ENCODE measurements at regions of chr7 and their contacts with region 1.

Region 1: DNA sequence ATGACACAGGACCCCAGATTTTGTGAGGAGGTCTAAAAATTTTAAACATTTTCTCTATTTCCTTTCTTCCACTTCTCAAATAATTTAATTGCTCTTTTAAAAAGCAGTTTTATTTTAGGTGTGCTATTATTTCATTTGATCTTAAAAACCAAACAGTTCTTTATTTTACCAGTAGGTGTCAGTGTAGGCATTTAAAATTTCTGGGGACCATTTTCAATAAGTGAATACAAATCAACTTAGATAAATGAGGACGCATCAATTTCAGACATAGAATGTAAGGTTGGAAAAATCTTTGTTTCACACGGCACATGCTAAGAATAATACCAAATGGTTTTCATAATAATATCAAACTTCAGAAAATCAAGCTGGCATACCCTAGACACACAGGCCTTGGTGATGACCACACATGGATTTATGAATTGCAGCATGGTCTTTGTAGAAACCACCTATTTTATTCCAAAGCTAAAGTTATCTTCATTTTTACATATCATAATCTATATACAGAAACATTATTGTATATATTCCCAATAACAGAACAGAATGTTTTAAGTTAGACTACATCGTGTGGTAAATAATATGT is 127.6 kb upstream of the SLC26A5 start:
- DNase-seq: no peak
- ATAC-seq: no peak
- H3K4me3 ChIP-seq: no peak overlapping the region
- H3K27ac ChIP-seq: no peak overlapping the region
- H3K4me1 ChIP-seq: no peaks in the 10 kb centered on the region
- H3K27me3 ChIP-seq: no peaks in the 10 kb centered on the region; a peak in 1 of 4 replicates
- CTCF ChIP-seq: peak; percentile 14 to 55 (median 38); a peak in 2 of 6 replicates
- EP300 ChIP-seq: no peak
- POLR2A ChIP-seq: no peak
- RAD21 ChIP-seq: peak; percentile 60

Region 2: DNA sequence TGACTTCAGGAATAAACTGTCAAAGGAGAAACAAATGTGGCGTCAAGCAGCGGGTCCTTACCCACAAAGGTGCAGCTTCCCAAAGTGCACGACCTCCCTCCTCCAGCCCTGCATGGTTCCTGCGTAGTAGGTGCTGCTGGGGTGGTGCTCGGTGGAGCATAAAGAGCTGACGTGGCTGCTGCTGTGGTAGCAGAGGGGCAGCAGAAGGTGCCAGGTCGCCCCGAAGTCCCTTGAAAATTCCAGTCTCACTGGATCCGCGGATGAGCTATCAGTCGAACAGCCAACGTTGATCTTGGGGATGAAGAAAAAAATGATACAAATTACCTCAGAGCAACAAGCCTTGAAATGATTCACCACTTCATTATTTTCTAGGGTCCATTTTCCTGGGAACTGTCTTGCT is 22.6 kb before region 1 on chr7:
- CTCF ChIA-PET with region 1: interaction called, 13 read pairs
- POLR2A ChIA-PET with region 1: no interaction called
- RAD21 ChIA-PET with region 1: no interaction called
- SMC1A ChIA-PET with region 1: no interaction called
- in situ Hi-C with region 1: no loop called
- intact Hi-C with region 1: no loop called
- DNase-seq: no peak
- ATAC-seq: no peak
- H3K4me3 ChIP-seq: no peak overlapping the region
- H3K27ac ChIP-seq: no peak overlapping the region
- H3K4me1 ChIP-seq: no peaks in the 10 kb centered on the region
- H3K27me3 ChIP-seq: no peaks in the 10 kb centered on the region
- CTCF ChIP-seq: no peak
- EP300 ChIP-seq: no peak
- POLR2A ChIP-seq: no peak
- RAD21 ChIP-seq: no peak

Region 3: GRCh38 chr7:103592187-103592586 is 18.6 kb after region 1 on chr7:
- CTCF ChIA-PET with region 1: interaction called, 11 read pairs
- POLR2A ChIA-PET with region 1: no interaction called
- RAD21 ChIA-PET with region 1: no interaction called
- SMC1A ChIA-PET with region 1: no interaction called
- in situ Hi-C with region 1: no loop called
- intact Hi-C with region 1: no loop called
- DNase-seq: no peak
- ATAC-seq: no peak
- H3K4me3 ChIP-seq: no peak overlapping the region
- H3K27ac ChIP-seq: no peak overlapping the region
- H3K4me1 ChIP-seq: no peaks in the 10 kb centered on the region
- H3K27me3 ChIP-seq: no peaks in the 10 kb centered on the region
- CTCF ChIP-seq: no peak
- EP300 ChIP-seq: no peak
- POLR2A ChIP-seq: no peak
- RAD21 ChIP-seq: no peak

Region 4: GRCh38 chr7:104156842-104157277 is 583.3 kb after region 1 on chr7:
- CTCF ChIA-PET with region 1: interaction called, 10 read pairs
- POLR2A ChIA-PET with region 1: no interaction called
- RAD21 ChIA-PET with region 1: no interaction called
- SMC1A ChIA-PET with region 1: interaction called, 6 read pairs
- in situ Hi-C with region 1: loop called (anchors 10 kb)
- intact Hi-C with region 1: loop called (anchors 1 kb)
- DNase-seq: no peak
- ATAC-seq: peak; percentile 42; the same call in 1 of the 3 replicates
- H3K4me3 ChIP-seq: no peak overlapping the region
- H3K27ac ChIP-seq: no peak overlapping the region
- H3K4me1 ChIP-seq: no peaks in the 10 kb centered on the region
- H3K27me3 ChIP-seq: no peaks in the 10 kb centered on the region
- CTCF ChIP-seq: peak; percentile 50 to 59 (median 56); a peak in 5 of 6 replicates
- EP300 ChIP-seq: no peak
- POLR2A ChIP-seq: no peak
- RAD21 ChIP-seq: peak; percentile 55

Region 5: DNA sequence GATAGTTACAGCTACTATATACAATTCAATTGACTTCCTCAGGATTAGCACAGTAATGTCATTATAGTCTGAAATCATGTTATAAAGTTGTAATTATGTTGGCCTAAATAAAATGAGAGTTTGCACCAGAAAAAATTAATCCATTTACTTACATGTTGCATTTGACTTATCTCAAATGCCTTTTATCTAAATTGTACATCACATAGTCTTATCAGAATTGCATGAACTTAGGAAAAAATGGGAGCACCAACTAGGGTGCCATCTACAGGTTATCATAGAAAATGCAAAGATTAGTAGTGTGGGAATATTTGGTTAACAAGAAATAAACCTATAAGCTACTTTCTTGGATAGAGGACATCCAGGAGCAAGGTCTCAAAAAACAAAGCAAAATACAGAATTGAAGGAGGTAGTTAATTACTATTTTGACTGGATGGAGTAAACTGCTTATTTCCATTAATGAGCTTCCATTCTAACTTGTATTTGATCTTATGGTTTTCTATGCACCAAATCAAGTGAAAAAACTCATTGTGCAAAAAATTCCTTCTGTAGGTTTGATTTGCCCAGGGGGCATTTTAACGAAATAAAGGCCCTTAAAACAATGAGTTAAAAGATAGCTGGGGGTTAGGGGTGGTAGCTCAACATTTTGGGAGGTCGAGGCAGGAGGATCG is 694.3 kb after region 1 on chr7:
- CTCF ChIA-PET with region 1: interaction called, 29 read pairs
- POLR2A ChIA-PET with region 1: no interaction called
- RAD21 ChIA-PET with region 1: no interaction called
- SMC1A ChIA-PET with region 1: interaction called, 7 read pairs
- in situ Hi-C with region 1: no loop called
- intact Hi-C with region 1: no loop called
- DNase-seq: no peak
- ATAC-seq: no peak
- H3K4me3 ChIP-seq: no peak overlapping the region
- H3K27ac ChIP-seq: no peak overlapping the region
- H3K4me1 ChIP-seq: no peaks in the 10 kb centered on the region
- H3K27me3 ChIP-seq: no peaks in the 10 kb centered on the region
- CTCF ChIP-seq: peak; percentile 43 to 52 (median 46); a peak in 5 of 6 replicates
- EP300 ChIP-seq: no peak
- POLR2A ChIP-seq: no peak
- RAD21 ChIP-seq: peak; percentile 31

Region 6: GRCh38 chr7:104914421-104914820 is 1340.9 kb after region 1 on chr7:
- CTCF ChIA-PET with region 1: interaction called, 4 read pairs
- POLR2A ChIA-PET with region 1: no interaction called
- RAD21 ChIA-PET with region 1: no interaction called
- SMC1A ChIA-PET with region 1: no interaction called
- in situ Hi-C with region 1: loop called (anchors 10 kb)
- intact Hi-C with region 1: loop called (anchors 10 kb)
- DNase-seq: no peak
- ATAC-seq: no peak
- H3K4me3 ChIP-seq: no peak overlapping the region
- H3K27ac ChIP-seq: no peak overlapping the region
- H3K4me1 ChIP-seq: peaks cover 4% of the 10 kb centered on the region; the same call in 1 of the 2 replicates
- H3K27me3 ChIP-seq: no peaks in the 10 kb centered on the region
- CTCF ChIP-seq: no peak
- EP300 ChIP-seq: no peak
- POLR2A ChIP-seq: no peak
- RAD21 ChIP-seq: no peak